HepG2 (cell line): ENCODE measurements at regions of chr18 and their contacts with region 1.

Region 1: DNA sequence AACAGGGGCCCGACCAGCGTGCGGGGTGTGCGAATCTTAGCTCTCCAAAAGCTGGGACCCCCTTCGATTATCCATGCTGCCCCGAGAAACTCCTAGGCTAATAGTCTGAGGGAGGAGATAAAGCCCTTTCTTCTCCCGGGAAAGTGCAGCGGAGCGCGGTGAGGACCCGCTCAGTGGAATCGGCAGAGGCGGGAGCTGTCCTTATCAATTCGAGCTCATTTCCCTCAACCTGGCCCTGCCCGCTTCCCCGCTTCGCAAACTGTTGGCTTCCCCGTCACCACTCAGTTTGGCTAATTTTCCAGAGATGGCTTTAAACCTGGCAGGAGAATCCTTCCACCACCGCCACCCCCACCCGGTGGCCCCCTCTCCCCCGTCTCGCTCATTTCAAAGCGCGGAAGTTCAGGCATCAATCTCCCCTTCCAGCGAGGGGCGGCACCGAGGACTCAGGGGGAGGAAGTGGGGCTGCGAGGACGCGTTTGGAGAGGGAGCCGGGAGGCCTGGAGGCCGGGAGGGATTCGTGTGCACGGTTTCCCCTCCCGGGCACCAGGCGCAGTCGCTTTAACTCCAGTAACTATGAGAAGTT is 1.6 kb downstream of the KLHL14 start:
- DNase-seq: peak; percentile 25
- ATAC-seq: peak; percentile 27
- H3K4me3 ChIP-seq: peak overlapping the region; percentile 88 to 93 (median 93)
- H3K27ac ChIP-seq: peak overlapping the region; percentile 93
- H3K4me1 ChIP-seq: peaks cover 26% of the 10 kb centered on the region
- H3K27me3 ChIP-seq: no peaks in the 10 kb centered on the region; a peak in 1 of 5 replicates
- CTCF ChIP-seq: no peak
- EP300 ChIP-seq: no peak
- POLR2A ChIP-seq: no peak
- RAD21 ChIP-seq: no peak

Region 2: GRCh38 chr18:32803568-32803967 is 32.3 kb after region 1 on chr18:
- CTCF ChIA-PET with region 1: no interaction called
- POLR2A ChIA-PET with region 1: interaction called, 136 read pairs
- in situ Hi-C with region 1: no loop called
- intact Hi-C with region 1: loop called (anchors 1 kb)
- DNase-seq: peak; percentile 99
- ATAC-seq: peak; percentile 94
- H3K4me3 ChIP-seq: peak overlapping the region in 2 of 3 experiments; percentile 43 to 46; a peak in 2 of 6 replicates
- H3K27ac ChIP-seq: peak overlapping the region; percentile 99
- H3K4me1 ChIP-seq: peaks cover 86% of the 10 kb centered on the region
- H3K27me3 ChIP-seq: no peaks in the 10 kb centered on the region
- CTCF ChIP-seq: no peak
- EP300 ChIP-seq: peak; percentile 97 to 100; a peak in 3 of 4 replicates
- POLR2A ChIP-seq: peak; percentile 56 to 91
- RAD21 ChIP-seq: 0 out of 2 replicates have a peak, but pooled peaks have one; percentile 35

Region 3: GRCh38 chr18:32822197-32822596 is 50.9 kb after region 1 on chr18:
- CTCF ChIA-PET with region 1: no interaction called
- POLR2A ChIA-PET with region 1: no interaction called
- in situ Hi-C with region 1: no loop called
- intact Hi-C with region 1: no loop called
- DNase-seq: no peak
- ATAC-seq: no peak
- H3K4me3 ChIP-seq: no peak overlapping the region
- H3K27ac ChIP-seq: no peak overlapping the region
- H3K4me1 ChIP-seq: no peaks in the 10 kb centered on the region
- H3K27me3 ChIP-seq: no peaks in the 10 kb centered on the region
- CTCF ChIP-seq: no peak
- EP300 ChIP-seq: no peak
- POLR2A ChIP-seq: no peak
- RAD21 ChIP-seq: no peak

Region 4: GRCh38 chr18:32847691-32848090 is 76.4 kb after region 1 on chr18:
- CTCF ChIA-PET with region 1: no interaction called
- POLR2A ChIA-PET with region 1: no interaction called
- in situ Hi-C with region 1: no loop called
- intact Hi-C with region 1: loop called (anchors 5 kb)
- DNase-seq: no peak
- ATAC-seq: peak; percentile 75
- H3K4me3 ChIP-seq: no peak overlapping the region
- H3K27ac ChIP-seq: no peak overlapping the region
- H3K4me1 ChIP-seq: peaks cover 6% of the 10 kb centered on the region; the same call in 1 of the 2 replicates
- H3K27me3 ChIP-seq: no peaks in the 10 kb centered on the region
- CTCF ChIP-seq: no peak
- EP300 ChIP-seq: no peak
- POLR2A ChIP-seq: no peak
- RAD21 ChIP-seq: no peak

Region 5: DNA sequence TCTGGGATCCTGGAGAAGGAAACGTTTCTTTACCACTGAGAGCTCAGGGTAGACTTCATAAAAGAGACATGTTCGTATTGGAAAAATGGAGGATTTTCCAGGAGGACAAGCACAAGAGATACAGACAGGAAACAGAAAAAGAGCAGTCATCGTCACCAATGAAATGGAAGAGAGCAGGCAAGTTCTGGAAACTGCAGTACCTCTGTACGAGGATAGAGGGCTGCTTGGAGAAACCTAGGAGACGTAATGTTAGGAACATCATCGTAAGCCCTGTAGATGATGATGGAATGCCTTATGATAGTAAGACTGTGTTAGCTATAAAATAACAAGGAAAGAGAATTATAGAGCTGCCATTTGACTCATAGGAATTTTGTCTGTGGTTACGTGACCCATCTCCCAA is 122.7 kb after region 1 on chr18:
- CTCF ChIA-PET with region 1: no interaction called
- POLR2A ChIA-PET with region 1: no interaction called
- in situ Hi-C with region 1: no loop called
- intact Hi-C with region 1: loop called (anchors 5 kb)
- DNase-seq: peak; percentile 45
- ATAC-seq: peak; percentile 92
- H3K4me3 ChIP-seq: no peak overlapping the region
- H3K27ac ChIP-seq: no peak overlapping the region
- H3K4me1 ChIP-seq: peaks cover 20% of the 10 kb centered on the region
- H3K27me3 ChIP-seq: no peaks in the 10 kb centered on the region
- CTCF ChIP-seq: peak; percentile 37
- EP300 ChIP-seq: no peak
- POLR2A ChIP-seq: no peak
- RAD21 ChIP-seq: 0 out of 2 replicates have a peak, but pooled peaks have one; percentile 31

Region 6: GRCh38 chr18:32919799-32920198 is 148.5 kb after region 1 on chr18:
- CTCF ChIA-PET with region 1: no interaction called
- POLR2A ChIA-PET with region 1: no interaction called
- in situ Hi-C with region 1: no loop called
- intact Hi-C with region 1: loop called (anchors 1 kb)
- DNase-seq: peak; percentile 85
- ATAC-seq: peak; percentile 100
- H3K4me3 ChIP-seq: no peak overlapping the region
- H3K27ac ChIP-seq: no peak overlapping the region
- H3K4me1 ChIP-seq: peaks cover 21% of the 10 kb centered on the region
- H3K27me3 ChIP-seq: no peaks in the 10 kb centered on the region
- CTCF ChIP-seq: peak; percentile 89
- EP300 ChIP-seq: no peak
- POLR2A ChIP-seq: no peak
- RAD21 ChIP-seq: peak; percentile 89